ENCODE measurements at regions of chr7 and their contacts with region 1.

Region 1: GRCh38 chr7:143263266-143264195 is at the start of gene GSTK1:
- DNase-seq: peak; percentile 81
- H3K4me3 Mint-ChIP-seq: peak within 1 kb of the TSS; percentile 98
- H3K27ac Mint-ChIP-seq: peak within 1 kb of the TSS; percentile 94
- H3K4me1 Mint-ChIP-seq: peaks cover 67% of the 10 kb centered on the region
- H3K27me3 Mint-ChIP-seq: no peaks in the 10 kb centered on the region
- total RNA-seq, gene GSTK1: 134 and 135 TPM in 2 replicates

Region 2: GRCh38 chr7:143279186-143280098 is 15.9 kb after region 1 on chr7:
- intact Hi-C with region 1: loop called (anchors 2 kb)
- DNase-seq: no peak
- H3K4me3 Mint-ChIP-seq: peak overlapping the region; percentile 61
- H3K27ac Mint-ChIP-seq: peak overlapping the region; percentile 88
- H3K4me1 Mint-ChIP-seq: peaks cover 41% of the 10 kb centered on the region
- H3K27me3 Mint-ChIP-seq: no peaks in the 10 kb centered on the region